ENCODE measurements at regions of chr9 and their contacts with region 1.

Region 1: GRCh38 chr9:33147416-33148169 is 19.5 kb downstream of the B4GALT1 start:
- DNase-seq: peak; percentile 6
- H3K4me3 ChIP-seq: no peak overlapping the region
- H3K27ac ChIP-seq: no peak overlapping the region
- H3K4me1 ChIP-seq: peaks cover 31 to 79% (median 43%) of the 10 kb centered on the region in 4 donors
- H3K27me3 ChIP-seq: no peaks in the 10 kb centered on the region
- CTCF ChIP-seq: no peak
- EP300 ChIP-seq: no peak
- POLR2A ChIP-seq: no peak

Region 2: GRCh38 chr9:32844259-32844658 is 303.3 kb before region 1 on chr9:
- in situ Hi-C with region 1: no loop called
- intact Hi-C with region 1: no loop called
- DNase-seq: no peak
- H3K4me3 ChIP-seq: no peak overlapping the region
- H3K27ac ChIP-seq: no peak overlapping the region
- H3K4me1 ChIP-seq: no peaks in the 10 kb centered on the region
- H3K27me3 ChIP-seq: no peaks in the 10 kb centered on the region
- CTCF ChIP-seq: no peak
- EP300 ChIP-seq: no peak
- POLR2A ChIP-seq: no peak

Region 3: DNA sequence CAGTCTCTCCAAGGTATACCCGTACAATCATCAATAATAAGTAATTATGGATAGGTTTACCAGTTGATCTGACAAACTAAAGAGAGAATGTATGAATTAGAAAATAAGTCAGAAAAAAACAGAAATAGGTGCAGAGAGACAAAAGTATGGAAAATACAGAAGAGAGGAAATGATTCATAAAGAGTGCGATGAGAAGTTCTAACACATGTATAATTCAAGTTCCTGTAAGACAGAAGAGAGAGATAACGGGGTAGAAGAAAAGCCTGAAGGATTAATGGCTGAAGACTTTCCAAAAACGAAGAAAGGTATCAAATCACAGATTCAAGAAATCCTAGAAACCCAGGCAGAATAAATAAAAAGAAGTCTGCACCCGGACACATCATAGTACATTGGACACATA is 55.0 kb before region 1 on chr9:
- in situ Hi-C with region 1: no loop called
- intact Hi-C with region 1: no loop called
- DNase-seq: no peak
- H3K4me3 ChIP-seq: no peak overlapping the region
- H3K27ac ChIP-seq: no peak overlapping the region
- H3K4me1 ChIP-seq: no peaks in the 10 kb centered on the region
- H3K27me3 ChIP-seq: no peaks in the 10 kb centered on the region
- CTCF ChIP-seq: no peak
- EP300 ChIP-seq: no peak
- POLR2A ChIP-seq: no peak

Region 4: GRCh38 chr9:33129886-33130507 is 17.6 kb before region 1 on chr9:
- in situ Hi-C with region 1: no loop called
- intact Hi-C with region 1: loop called (anchors 2 kb)
- DNase-seq: peak; percentile 57
- H3K4me3 ChIP-seq: no peak overlapping the region
- H3K27ac ChIP-seq: peak overlapping the region; percentile 77 to 86 (median 79)
- H3K4me1 ChIP-seq: peaks cover 21 to 59% (median 40%) of the 10 kb centered on the region in 4 donors
- H3K27me3 ChIP-seq: no peaks in the 10 kb centered on the region
- CTCF ChIP-seq: no peak
- EP300 ChIP-seq: no peak
- POLR2A ChIP-seq: no peak

Region 5: GRCh38 chr9:33220681-33221567 is 73.3 kb after region 1 on chr9:
- in situ Hi-C with region 1: no loop called
- intact Hi-C with region 1: no loop called
- DNase-seq: no peak
- H3K4me3 ChIP-seq: no peak overlapping the region
- H3K27ac ChIP-seq: no peak overlapping the region
- H3K4me1 ChIP-seq: peaks cover 3 to 7% (median 6%) of the 10 kb centered on the region in 4 donors
- H3K27me3 ChIP-seq: no peaks in the 10 kb centered on the region
- CTCF ChIP-seq: no peak
- EP300 ChIP-seq: peak; percentile 14
- POLR2A ChIP-seq: no peak

Region 6: GRCh38 chr9:33381231-33381791 is 233.7 kb after region 1 on chr9:
- in situ Hi-C with region 1: no loop called
- intact Hi-C with region 1: no loop called
- DNase-seq: no peak
- H3K4me3 ChIP-seq: no peak overlapping the region
- H3K27ac ChIP-seq: no peak overlapping the region
- H3K4me1 ChIP-seq: no peaks in the 10 kb centered on the region
- H3K27me3 ChIP-seq: no peaks in the 10 kb centered on the region
- CTCF ChIP-seq: no peak
- EP300 ChIP-seq: no peak
- POLR2A ChIP-seq: no peak

Measured in transverse colon (tissue), 4 donors.